BJ (cell line): ENCODE measurements at regions of chr2 and their contacts with region 1.

Region 1: DNA sequence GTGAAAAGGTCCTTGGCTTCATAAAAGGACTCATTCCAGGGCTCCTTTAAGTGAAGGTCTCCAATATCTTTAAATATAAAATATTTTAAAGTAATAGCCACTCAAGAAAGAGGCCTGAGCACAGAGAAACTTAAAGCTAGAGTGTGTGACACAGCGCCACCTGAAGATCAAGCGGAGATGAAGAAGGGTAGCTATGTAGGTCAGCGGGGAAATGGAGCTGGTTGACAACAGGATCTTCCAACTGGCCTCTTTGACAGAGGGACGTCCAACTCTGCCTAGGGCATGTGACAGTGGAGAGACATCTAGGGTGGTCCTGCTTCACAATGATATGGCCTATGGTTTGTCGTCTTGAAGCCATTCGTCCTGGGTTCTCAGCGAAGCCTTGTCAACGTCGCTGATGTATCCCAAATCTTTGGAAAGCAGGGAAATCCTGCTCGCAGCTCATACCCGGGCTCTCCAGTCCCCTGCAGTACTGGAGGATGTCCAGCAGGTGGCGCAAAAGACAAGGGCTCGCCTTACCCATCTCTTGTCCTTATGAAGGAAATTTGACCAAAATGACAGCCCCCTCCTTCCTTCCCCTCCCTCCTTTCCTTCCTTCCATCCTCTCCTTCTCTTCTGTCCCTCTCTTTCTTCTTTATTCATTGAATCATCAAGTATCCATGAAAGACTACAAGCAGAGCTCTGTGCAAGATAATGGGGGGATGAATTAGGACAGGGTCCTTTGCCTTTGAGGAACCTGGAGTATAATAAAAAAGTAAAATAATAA is 59.6 kb downstream of the LONRF2 start:
- DNase-seq: no peak
- H3K4me3 ChIP-seq: no peak overlapping the region
- H3K27me3 ChIP-seq: peaks cover 2% of the 10 kb centered on the region; the same call in 1 of the 2 replicates
- CTCF ChIP-seq: peak; percentile 97

Region 2: DNA sequence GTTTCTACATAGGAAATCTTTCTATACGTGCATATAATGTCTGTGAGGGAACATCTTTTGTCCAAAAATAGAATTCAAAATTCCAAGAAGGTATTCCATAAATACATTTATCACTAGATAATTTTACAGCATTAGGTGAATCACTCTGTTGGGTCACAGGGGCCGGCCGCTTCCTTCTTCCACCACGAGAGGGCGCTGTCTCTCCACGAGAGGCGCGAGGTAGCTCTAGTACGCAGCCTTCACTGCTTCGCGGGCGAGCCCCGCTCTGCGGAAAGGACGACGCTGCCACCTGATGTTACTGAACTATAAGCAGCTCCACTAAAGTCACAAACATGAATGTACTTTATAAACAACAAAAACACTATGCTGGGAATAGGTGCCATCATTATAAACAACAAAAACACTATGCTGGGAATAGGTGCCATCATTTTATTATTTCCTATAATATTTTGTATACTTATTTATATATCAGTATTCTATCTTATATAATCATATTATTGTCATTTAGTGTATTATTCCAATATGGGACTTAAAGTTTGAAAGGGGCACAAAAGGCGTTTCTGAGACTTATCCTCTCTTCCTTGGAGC is 703.6 kb before region 1 on chr2:
- CTCF ChIA-PET with region 1: interaction called, 56 read pairs
- POLR2A ChIA-PET with region 1: no interaction called
- DNase-seq: no peak
- H3K4me3 ChIP-seq: no peak overlapping the region
- H3K27me3 ChIP-seq: no peaks in the 10 kb centered on the region
- CTCF ChIP-seq: peak; percentile 96

Region 3: GRCh38 chr2:99662761-99663341 is 599.9 kb before region 1 on chr2:
- CTCF ChIA-PET with region 1: no interaction called
- POLR2A ChIA-PET with region 1: no interaction called
- DNase-seq: peak; percentile 99
- H3K4me3 ChIP-seq: no peak overlapping the region
- H3K27me3 ChIP-seq: no peaks in the 10 kb centered on the region
- CTCF ChIP-seq: no peak

Region 4: GRCh38 chr2:100272841-100273329 is 10.1 kb after region 1 on chr2:
- CTCF ChIA-PET with region 1: interaction called, 72 read pairs
- POLR2A ChIA-PET with region 1: no interaction called
- DNase-seq: no peak
- H3K4me3 ChIP-seq: no peak overlapping the region
- H3K27me3 ChIP-seq: no peaks in the 10 kb centered on the region
- CTCF ChIP-seq: no peak

Region 5: GRCh38 chr2:100291120-100291970 is 28.6 kb after region 1 on chr2:
- CTCF ChIA-PET with region 1: interaction called, 24 read pairs
- POLR2A ChIA-PET with region 1: no interaction called
- DNase-seq: peak; percentile 61
- H3K4me3 ChIP-seq: no peak overlapping the region
- H3K27me3 ChIP-seq: 0 out of 2 replicates have a peak, but pooled peaks cover 1% of the 10 kb centered on the region
- CTCF ChIP-seq: no peak

Region 6: DNA sequence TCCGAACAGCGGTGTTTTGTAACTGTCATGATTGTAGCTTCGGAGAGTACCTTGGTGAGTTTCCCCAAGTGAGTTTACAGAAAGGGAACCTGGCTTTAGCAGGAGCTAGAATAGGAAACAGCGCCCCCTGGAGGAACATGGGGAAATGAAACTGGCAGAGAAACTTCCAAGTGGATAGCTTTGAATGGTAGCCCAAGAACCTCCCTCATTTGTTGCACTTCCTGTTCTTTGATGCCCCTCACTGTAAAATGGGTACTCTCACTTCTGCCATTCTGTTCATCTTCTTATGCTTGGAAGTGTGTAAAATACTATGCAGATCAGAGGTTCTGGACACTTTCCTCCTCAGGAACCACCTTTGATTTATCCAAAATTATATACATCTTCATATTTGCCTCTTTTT is 118.5 kb after region 1 on chr2:
- CTCF ChIA-PET with region 1: interaction called, 224 read pairs
- POLR2A ChIA-PET with region 1: no interaction called
- DNase-seq: peak; percentile 16
- H3K4me3 ChIP-seq: no peak overlapping the region
- H3K27me3 ChIP-seq: peaks cover 4% of the 10 kb centered on the region
- CTCF ChIP-seq: peak; percentile 91

Region 7: DNA sequence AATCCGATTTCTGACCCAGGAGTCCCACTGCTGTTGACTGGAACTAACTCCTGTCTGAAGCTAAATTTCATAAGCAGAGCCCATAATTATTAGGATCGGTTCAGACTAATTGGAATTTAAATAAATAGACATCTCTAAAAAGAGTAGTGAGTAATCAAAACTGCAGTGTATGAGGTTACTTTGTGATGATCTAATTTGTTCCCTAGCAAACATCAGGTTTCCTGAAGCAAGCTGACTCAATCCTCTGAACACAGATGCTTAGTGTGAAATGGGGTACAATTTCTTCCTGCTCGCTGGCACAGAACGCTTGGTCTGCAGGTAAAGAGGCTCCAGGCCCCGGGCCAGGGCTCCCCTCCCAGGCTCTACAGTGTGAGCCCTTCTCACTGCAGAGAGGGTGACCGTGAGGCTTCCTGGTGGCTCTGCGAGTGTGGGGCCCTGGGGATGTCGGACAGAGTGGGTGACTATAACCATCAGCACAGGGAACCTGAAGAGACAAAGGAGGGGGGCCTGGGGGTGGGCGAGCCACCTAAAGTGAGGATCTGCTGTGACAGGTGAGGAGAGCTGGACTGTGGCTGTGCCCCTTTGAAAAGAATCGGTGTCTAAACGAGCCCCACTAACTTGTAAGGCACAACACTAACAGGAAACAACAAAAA is 134.5 kb after region 1 on chr2:
- CTCF ChIA-PET with region 1: interaction called, 63 read pairs
- POLR2A ChIA-PET with region 1: no interaction called
- DNase-seq: no peak
- H3K4me3 ChIP-seq: no peak overlapping the region
- H3K27me3 ChIP-seq: no peaks in the 10 kb centered on the region
- CTCF ChIP-seq: no peak